ENCODE measurements at regions of chr10 and their contacts with region 1.

Region 1: DNA sequence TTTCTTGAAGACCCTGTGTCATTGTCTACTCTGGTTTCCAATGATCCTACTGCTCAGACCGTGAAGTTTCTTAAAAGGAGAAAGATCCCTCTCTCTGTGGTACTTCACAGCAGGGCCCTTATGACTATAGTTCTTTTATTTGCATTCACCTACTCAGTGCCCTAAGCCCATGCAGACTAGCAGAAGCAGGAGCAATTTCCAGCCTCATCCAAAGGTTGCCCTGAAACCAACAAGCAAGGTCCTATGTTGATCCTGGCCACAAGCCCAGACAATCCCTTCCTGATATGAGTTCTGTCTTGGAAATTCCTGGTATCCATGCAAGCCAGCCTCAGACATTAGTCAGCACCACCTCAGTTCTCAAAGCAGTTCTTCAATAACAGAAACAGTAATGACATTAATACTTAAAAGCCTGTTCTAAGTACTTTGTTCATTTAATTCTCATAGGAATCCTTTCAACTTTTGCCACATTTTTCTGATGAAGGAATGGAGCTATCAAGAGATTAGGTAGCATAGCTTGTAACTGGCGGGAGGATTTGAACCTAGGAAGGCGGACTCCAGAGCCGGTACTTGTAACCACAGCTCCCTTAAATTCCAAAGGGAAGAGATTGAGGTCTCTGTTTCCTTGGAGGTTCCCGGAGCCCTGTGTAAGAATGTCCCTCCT is 58.1 kb upstream of the ST8SIA6 start:
- DNase-seq: peak; percentile 96
- H3K4me3 ChIP-seq: no peak overlapping the region
- H3K27ac ChIP-seq: peak overlapping the region; percentile 83
- H3K4me1 ChIP-seq: peaks cover 24% of the 10 kb centered on the region
- H3K27me3 ChIP-seq: no peaks in the 10 kb centered on the region
- CTCF ChIP-seq: no peak

Region 2: GRCh38 chr10:17527516-17528146 is 15.2 kb after region 1 on chr10:
- CTCF ChIA-PET with region 1: no interaction called
- dilution Hi-C with region 1: no loop called
- in situ Hi-C with region 1: no loop called
- intact Hi-C with region 1: loop called (anchors 1 kb)
- DNase-seq: peak; percentile 69
- H3K4me3 ChIP-seq: no peak overlapping the region
- H3K27ac ChIP-seq: peak overlapping the region; percentile 53
- H3K4me1 ChIP-seq: peaks cover 11% of the 10 kb centered on the region
- H3K27me3 ChIP-seq: no peaks in the 10 kb centered on the region
- CTCF ChIP-seq: no peak

Measured in mammary epithelial cell (primary cell).